Activated T-helper 1 cell treated with anti-CD3 and anti-CD28 coated beads, Interleukin-12 subunit alpha, Interleukin-12 subunit beta, Interleukin-2, Interleukin-4 antibody, amounts not matched to agents 30 ng/mL and 10 ng/mL and 1 ng/mL, durations not matched to agents 14 hours and 24 hours and 36 hours (primary cell): ENCODE measurements at regions of chr19 and their contacts with region 1.

Region 1: DNA sequence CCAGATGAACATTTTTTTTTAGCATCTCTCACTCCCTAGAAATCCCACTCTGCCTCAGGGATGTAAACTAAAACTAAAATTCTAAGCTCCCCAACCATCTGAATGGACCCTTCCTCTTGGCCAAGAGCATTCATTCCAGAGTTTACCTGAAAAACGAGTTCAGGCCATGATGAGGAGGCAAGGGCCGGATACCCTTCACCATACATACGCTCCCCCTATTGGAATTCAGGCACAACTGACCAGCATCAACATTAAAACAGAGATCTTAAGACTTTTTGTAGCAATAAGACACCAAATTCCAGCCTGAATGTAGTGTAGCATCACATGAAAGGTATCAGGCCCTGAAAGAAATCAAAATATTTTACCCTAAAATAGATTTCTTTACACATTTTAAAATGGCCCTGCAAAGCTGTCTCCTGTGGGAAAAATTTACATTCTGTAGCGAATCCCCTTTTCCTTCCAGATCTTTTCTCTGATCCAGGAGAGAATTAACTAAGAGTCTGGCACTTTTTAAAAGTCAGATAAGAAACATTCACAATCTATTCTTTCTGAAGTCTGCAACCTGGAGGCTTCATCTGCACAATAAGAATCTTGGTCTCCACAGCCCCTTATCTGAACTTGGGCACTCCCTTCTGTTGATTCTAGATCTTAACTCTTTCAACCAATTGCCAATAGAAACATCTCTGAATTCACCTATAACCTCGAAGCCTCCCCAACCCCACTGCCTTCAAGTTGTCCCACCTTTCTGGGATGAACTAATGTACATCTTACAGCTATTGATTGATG is 888.5 kb downstream of the UQCRFS1 start:
- DNase-seq: no peak
- H3K4me3 Mint-ChIP-seq: no peak overlapping the region
- H3K27ac Mint-ChIP-seq: no peak overlapping the region
- H3K4me1 Mint-ChIP-seq: peaks cover 19% of the 10 kb centered on the region
- H3K27me3 Mint-ChIP-seq: no peaks in the 10 kb centered on the region

Region 2: GRCh38 chr19:27966390-27966816 is 358.1 kb before region 1 on chr19:
- intact Hi-C with region 1: loop called (anchors 1 kb)
- DNase-seq: no peak
- H3K4me3 Mint-ChIP-seq: no peak overlapping the region
- H3K27ac Mint-ChIP-seq: no peak overlapping the region
- H3K4me1 Mint-ChIP-seq: no peaks in the 10 kb centered on the region
- H3K27me3 Mint-ChIP-seq: peaks cover 10% of the 10 kb centered on the region

Region 3: GRCh38 chr19:27974082-27974513 is 350.4 kb before region 1 on chr19:
- intact Hi-C with region 1: loop called (anchors 2 kb)
- DNase-seq: no peak
- H3K4me3 Mint-ChIP-seq: no peak overlapping the region
- H3K27ac Mint-ChIP-seq: no peak overlapping the region
- H3K4me1 Mint-ChIP-seq: no peaks in the 10 kb centered on the region
- H3K27me3 Mint-ChIP-seq: no peaks in the 10 kb centered on the region

Region 4: GRCh38 chr19:28242297-28242927 is 82.1 kb before region 1 on chr19:
- intact Hi-C with region 1: loop called (anchors 1 kb)
- DNase-seq: peak; percentile 26
- H3K4me3 Mint-ChIP-seq: no peak overlapping the region
- H3K27ac Mint-ChIP-seq: no peak overlapping the region
- H3K4me1 Mint-ChIP-seq: peaks cover 6% of the 10 kb centered on the region
- H3K27me3 Mint-ChIP-seq: peaks cover 2% of the 10 kb centered on the region